ENCODE measurements at regions of chr9 and their contacts with region 1.

Region 1: GRCh38 chr9:37430841-37431597 is 8.5 kb downstream of the GRHPR start:
- DNase-seq: no peak
- H3K4me3 ChIP-seq: no peak overlapping the region
- H3K27ac ChIP-seq: no peak overlapping the region
- H3K4me1 ChIP-seq: peaks cover 3 to 16% (median 9%) of the 10 kb centered on the region in 4 experiments
- H3K27me3 ChIP-seq: no peaks in the 10 kb centered on the region
- CTCF ChIP-seq: peak in 2 of 3 experiments; percentile 12 to 31; a peak in 2 of 4 replicates
- EP300 ChIP-seq: no peak
- POLR2A ChIP-seq: no peak
- RAD21 ChIP-seq: peak in 1 of 2 experiments; percentile 19; a peak in 1 of 4 replicates

Region 2: DNA sequence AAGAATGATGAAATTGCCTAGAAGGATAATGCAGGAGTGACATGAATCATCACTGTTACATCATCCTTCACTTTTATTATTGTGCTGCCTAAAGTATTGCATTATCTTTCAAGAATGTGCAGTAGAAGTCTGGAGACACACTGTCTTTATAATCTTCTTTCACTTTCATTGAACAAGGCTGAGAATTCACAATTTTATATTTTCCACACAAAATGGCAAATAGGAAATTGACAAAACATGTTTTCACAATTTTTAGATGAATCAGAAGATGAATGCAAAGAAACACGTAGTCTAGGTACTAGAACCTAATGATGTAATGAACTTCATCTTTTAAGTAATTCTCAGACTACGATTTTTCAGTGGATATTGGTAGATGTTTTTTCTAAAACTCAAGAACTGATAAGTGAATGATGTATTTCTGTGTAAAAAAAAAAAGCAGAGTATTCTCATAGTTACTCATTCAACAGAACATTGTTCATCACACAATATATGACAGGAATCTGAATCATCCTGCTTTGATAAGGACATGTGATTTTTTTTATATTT is 140.0 kb before region 1 on chr9:
- CTCF ChIA-PET with region 1: no interaction called
- POLR2A ChIA-PET with region 1: no interaction called
- DNase-seq: no peak
- H3K4me3 ChIP-seq: no peak overlapping the region
- H3K27ac ChIP-seq: no peak overlapping the region
- H3K4me1 ChIP-seq: no peaks in the 10 kb centered on the region; a peak in 2 of 7 replicates
- H3K27me3 ChIP-seq: no peaks in the 10 kb centered on the region; a peak in 1 of 7 replicates
- CTCF ChIP-seq: no peak
- EP300 ChIP-seq: no peak
- POLR2A ChIP-seq: no peak
- RAD21 ChIP-seq: no peak

Region 3: GRCh38 chr9:37465249-37466036 is 34.4 kb after region 1 on chr9 and contains the start of gene ZBTB5:
- CTCF ChIA-PET with region 1: interaction called, 3 read pairs
- POLR2A ChIA-PET with region 1: interaction called, 10 read pairs
- DNase-seq: peak; percentile 96 to 98
- H3K4me3 ChIP-seq: peak within 1 kb of the TSS; percentile 69 to 94 (median 87)
- H3K27ac ChIP-seq: peak within 1 kb of the TSS; percentile 98
- H3K4me1 ChIP-seq: peaks cover 0 to 9% (median 4%) of the 10 kb centered on the region in 4 experiments; a peak in 2 of 7 replicates
- H3K27me3 ChIP-seq: no peaks in the 10 kb centered on the region
- CTCF ChIP-seq: no peak
- EP300 ChIP-seq: no peak
- POLR2A ChIP-seq: peak; percentile 52 to 62; a peak in 2 of 3 replicates
- RAD21 ChIP-seq: no peak
- total RNA-seq, gene ZBTB5: 13.6 and 14.5 TPM in 2 replicates

Measured in H1 (cell line).